ENCODE measurements at regions of chrX and their contacts with region 1.

Region 1: DNA sequence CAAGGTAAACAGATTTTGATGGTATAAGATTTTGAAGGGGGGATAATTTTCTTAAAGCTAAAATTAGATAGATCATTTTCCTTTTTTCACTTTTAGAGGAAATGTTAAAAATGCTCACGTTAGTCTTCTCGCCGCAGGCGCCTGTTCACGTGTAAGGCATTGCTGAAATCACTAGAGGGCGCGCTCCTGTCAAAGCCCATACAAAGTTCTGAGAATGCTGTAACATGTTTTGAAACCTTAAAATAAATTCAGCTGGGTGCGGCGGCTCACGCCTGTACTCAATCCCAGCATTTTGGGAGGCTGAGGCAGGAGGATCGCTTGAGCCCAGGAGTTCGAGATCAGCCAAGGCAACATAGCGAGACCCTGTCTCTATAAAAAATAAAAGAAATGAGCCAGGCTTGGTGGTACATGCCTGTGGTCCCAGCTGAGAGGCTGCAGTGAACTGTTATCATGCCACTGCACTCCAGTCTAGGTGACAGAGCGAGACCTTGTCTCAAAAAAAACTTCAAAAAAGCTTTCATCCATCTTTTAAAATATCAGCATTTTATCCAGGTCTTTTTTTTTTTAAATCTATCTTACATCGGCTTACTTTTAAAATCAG is 138.0 kb downstream of the RBMX2 start:
- DNase-seq: peak; percentile 56
- ATAC-seq: no peak
- H3K4me3 Mint-ChIP-seq: no peak overlapping the region
- H3K27ac Mint-ChIP-seq: no peak overlapping the region
- H3K4me1 Mint-ChIP-seq: no peaks in the 10 kb centered on the region
- H3K27me3 Mint-ChIP-seq: peaks cover 4% of the 10 kb centered on the region
- CTCF ChIP-seq: peak; percentile 56

Region 2: DNA sequence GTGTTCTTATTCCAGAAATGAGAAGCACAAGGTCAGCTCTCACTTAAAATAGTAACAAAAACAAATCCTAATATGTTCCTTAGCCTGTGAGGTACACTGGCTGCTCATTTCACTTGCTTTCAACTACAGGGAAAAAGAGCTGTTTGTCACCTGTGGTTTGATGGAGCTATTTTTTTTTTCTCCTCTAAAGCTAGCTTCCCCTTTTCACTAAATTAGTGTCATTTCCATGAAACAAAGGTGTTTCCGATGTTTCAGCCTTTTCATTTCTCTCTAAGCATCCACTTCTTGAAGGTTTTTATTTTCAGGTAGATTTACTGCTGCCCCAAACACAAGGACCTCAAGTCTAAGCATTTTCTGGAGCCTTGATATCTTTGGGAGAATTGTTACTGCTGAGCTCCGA is 10.5 kb after region 1 on chrX:
- CTCF ChIA-PET with region 1: interaction called, 15 read pairs
- POLR2A ChIA-PET with region 1: no interaction called
- intact Hi-C with region 1: no loop called
- DNase-seq: no peak
- ATAC-seq: no peak
- H3K4me3 Mint-ChIP-seq: no peak overlapping the region
- H3K27ac Mint-ChIP-seq: no peak overlapping the region
- H3K4me1 Mint-ChIP-seq: no peaks in the 10 kb centered on the region
- H3K27me3 Mint-ChIP-seq: peaks cover 4% of the 10 kb centered on the region
- CTCF ChIP-seq: no peak

Region 3: GRCh38 chrX:130623508-130623907 is 83.7 kb after region 1 on chrX:
- CTCF ChIA-PET with region 1: no interaction called
- POLR2A ChIA-PET with region 1: no interaction called
- intact Hi-C with region 1: no loop called
- DNase-seq: no peak
- ATAC-seq: no peak
- H3K4me3 Mint-ChIP-seq: no peak overlapping the region
- H3K27ac Mint-ChIP-seq: no peak overlapping the region
- H3K4me1 Mint-ChIP-seq: no peaks in the 10 kb centered on the region
- H3K27me3 Mint-ChIP-seq: no peaks in the 10 kb centered on the region
- CTCF ChIP-seq: no peak

Region 4: GRCh38 chrX:131068945-131069719 is 529.3 kb after region 1 on chrX:
- CTCF ChIA-PET with region 1: no interaction called
- POLR2A ChIA-PET with region 1: no interaction called
- intact Hi-C with region 1: no loop called
- DNase-seq: peak; percentile 41
- ATAC-seq: peak; percentile 34
- H3K4me3 Mint-ChIP-seq: no peak overlapping the region
- H3K27ac Mint-ChIP-seq: no peak overlapping the region
- H3K4me1 Mint-ChIP-seq: no peaks in the 10 kb centered on the region
- H3K27me3 Mint-ChIP-seq: peaks cover 35% of the 10 kb centered on the region
- CTCF ChIP-seq: peak; percentile 22